Endothelial cell of umbilical vein (primary cell): ENCODE measurements at regions of chr4 and their contacts with region 1.

Region 1: GRCh38 chr4:42656944-42657792 is at the start of gene ATP8A1:
- DNase-seq: peak; percentile 89
- H3K4me3 ChIP-seq: peak within 1 kb of the TSS; percentile 12 to 48 (median 47)
- H3K27ac ChIP-seq: peak within 1 kb of the TSS; percentile 81
- H3K4me1 ChIP-seq: peaks cover 26% of the 10 kb centered on the region
- H3K27me3 ChIP-seq: peaks cover 2 to 16% of the 10 kb centered on the region in 2 experiments
- CTCF ChIP-seq: no peak
- POLR2A ChIP-seq: peak; percentile 45
- total RNA-seq, gene ATP8A1: 1.9 and 11.5 TPM in 2 replicates

Region 2: DNA sequence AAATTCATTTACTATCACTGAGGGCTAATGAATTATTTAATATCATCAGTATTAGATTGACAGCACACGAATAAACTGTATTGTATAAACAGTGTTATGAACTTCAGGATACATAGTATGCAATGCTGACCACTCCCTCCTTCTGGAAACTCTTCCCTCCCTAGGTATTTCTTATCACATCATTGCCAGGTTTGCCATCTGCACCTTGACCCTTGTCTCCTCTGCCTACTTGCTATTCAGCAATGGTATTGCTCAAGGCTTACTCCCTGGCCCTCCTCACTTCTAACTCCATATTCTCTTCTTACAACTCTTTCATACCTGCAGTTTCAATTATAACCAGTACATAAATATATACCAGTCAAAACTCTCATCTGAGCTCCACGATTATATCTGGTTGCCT is 39.1 kb before region 1 on chr4:
- CTCF ChIA-PET with region 1: no interaction called
- POLR2A ChIA-PET with region 1: no interaction called
- dilution Hi-C with region 1: no loop called
- intact Hi-C with region 1: no loop called
- DNase-seq: no peak
- H3K4me3 ChIP-seq: no peak overlapping the region
- H3K27ac ChIP-seq: no peak overlapping the region
- H3K4me1 ChIP-seq: no peaks in the 10 kb centered on the region
- H3K27me3 ChIP-seq: no peaks in the 10 kb centered on the region
- CTCF ChIP-seq: no peak
- POLR2A ChIP-seq: no peak

Region 3: GRCh38 chr4:42673082-42673425 is 15.9 kb after region 1 on chr4:
- CTCF ChIA-PET with region 1: interaction called, 10 read pairs
- POLR2A ChIA-PET with region 1: no interaction called
- dilution Hi-C with region 1: no loop called
- intact Hi-C with region 1: no loop called
- DNase-seq: no peak
- H3K4me3 ChIP-seq: no peak overlapping the region
- H3K27ac ChIP-seq: no peak overlapping the region
- H3K4me1 ChIP-seq: no peaks in the 10 kb centered on the region
- H3K27me3 ChIP-seq: peaks cover 3 to 9% of the 10 kb centered on the region in 2 experiments
- CTCF ChIP-seq: no peak
- POLR2A ChIP-seq: no peak